Sigmoid colon (tissue), 7 donors: ENCODE measurements at regions of chr12 and their contacts with region 1.

Region 1: GRCh38 chr12:70576346-70577282 is 60.6 kb downstream of the PTPRB start:
- DNase-seq: no peak
- H3K4me3 ChIP-seq: no peak overlapping the region
- H3K27ac ChIP-seq: no peak overlapping the region
- H3K4me1 ChIP-seq: peaks cover 0 to 10% (median 8%) of the 10 kb centered on the region in 4 donors
- H3K27me3 ChIP-seq: peaks cover 0 to 4% (median 0%) of the 10 kb centered on the region in 3 donors
- CTCF ChIP-seq: peak; percentile 32 to 72 (median 68)
- EP300 ChIP-seq: no peak
- POLR2A ChIP-seq: no peak

Region 2: DNA sequence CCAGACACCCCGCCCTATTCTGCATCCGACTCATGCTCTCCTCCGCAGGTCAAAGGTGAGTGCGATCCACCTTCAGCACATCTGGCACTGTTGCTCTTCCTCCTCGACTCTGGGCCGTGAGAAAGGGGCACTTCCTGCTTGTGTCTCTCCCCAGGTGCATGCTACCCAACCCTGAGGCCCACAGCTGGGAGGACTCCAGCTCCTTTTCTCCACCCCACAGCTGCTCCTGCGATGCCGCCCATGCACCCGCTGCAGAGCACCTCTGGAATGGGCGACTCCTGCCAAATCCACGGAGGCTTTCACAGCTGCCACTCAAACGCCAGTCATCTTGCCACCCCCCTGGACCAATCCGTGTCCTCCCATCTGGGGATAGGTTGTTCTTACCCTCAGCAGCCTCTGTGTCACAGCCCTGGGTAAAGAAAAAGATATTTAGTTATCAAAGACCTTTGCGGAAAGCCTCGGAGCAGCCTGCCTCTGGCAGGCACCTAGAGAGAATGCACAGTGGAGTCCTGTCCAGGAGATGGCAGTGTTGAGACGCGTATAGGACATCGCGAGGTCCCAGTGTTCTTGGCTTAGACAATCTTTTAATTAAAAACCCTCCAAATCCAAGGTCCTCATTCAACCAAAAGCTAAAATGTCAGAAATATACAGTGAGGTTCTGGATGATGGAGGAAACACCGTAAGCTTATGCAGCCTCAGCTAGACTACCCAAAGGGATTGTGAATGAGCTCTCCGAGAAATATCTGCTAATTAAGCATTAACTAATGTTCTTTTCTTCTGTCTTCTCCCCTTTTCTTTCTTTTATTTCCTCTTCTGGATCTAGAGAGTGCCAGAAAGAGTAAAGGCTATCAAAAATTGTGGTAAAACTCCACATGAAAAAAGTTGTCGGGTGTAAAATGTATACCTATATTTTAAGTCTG is 697.3 kb before region 1 on chr12:
- intact Hi-C with region 1: loop called (anchors 1 kb)
- DNase-seq: no peak
- H3K4me3 ChIP-seq: no peak overlapping the region
- H3K27ac ChIP-seq: no peak overlapping the region
- H3K4me1 ChIP-seq: peaks cover 0 to 8% (median 3%) of the 10 kb centered on the region in 4 donors
- H3K27me3 ChIP-seq: peaks cover 0 to 12% (median 0%) of the 10 kb centered on the region in 3 donors
- CTCF ChIP-seq: peak; percentile 29 to 74 (median 68)
- EP300 ChIP-seq: no peak
- POLR2A ChIP-seq: no peak

Region 3: DNA sequence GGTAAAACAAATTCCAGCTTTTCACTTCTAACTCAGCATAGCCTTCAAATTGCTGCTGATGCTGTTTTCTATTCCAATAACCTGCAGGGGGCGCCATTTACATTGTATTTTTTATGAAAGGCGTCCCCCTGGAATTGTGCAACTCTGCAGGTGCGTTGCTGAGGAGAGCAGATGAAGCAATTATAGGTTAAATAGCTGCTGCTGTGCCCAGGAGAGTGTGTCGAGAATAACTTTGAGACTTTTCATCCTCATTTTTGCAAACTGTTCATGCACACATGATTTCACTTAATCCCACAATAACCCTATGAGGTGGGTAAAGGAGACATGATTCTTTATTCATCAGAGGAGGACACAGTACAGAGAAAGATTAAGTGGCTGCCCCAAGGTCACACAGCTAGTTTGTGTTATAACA is 675.9 kb before region 1 on chr12:
- intact Hi-C with region 1: loop called (anchors 1 kb)
- DNase-seq: peak; percentile 79
- H3K4me3 ChIP-seq: no peak overlapping the region
- H3K27ac ChIP-seq: no peak overlapping the region
- H3K4me1 ChIP-seq: no peaks in the 10 kb centered on the region
- H3K27me3 ChIP-seq: no peaks in the 10 kb centered on the region
- CTCF ChIP-seq: peak; percentile 40 to 79 (median 71)
- EP300 ChIP-seq: no peak
- POLR2A ChIP-seq: no peak

Region 4: DNA sequence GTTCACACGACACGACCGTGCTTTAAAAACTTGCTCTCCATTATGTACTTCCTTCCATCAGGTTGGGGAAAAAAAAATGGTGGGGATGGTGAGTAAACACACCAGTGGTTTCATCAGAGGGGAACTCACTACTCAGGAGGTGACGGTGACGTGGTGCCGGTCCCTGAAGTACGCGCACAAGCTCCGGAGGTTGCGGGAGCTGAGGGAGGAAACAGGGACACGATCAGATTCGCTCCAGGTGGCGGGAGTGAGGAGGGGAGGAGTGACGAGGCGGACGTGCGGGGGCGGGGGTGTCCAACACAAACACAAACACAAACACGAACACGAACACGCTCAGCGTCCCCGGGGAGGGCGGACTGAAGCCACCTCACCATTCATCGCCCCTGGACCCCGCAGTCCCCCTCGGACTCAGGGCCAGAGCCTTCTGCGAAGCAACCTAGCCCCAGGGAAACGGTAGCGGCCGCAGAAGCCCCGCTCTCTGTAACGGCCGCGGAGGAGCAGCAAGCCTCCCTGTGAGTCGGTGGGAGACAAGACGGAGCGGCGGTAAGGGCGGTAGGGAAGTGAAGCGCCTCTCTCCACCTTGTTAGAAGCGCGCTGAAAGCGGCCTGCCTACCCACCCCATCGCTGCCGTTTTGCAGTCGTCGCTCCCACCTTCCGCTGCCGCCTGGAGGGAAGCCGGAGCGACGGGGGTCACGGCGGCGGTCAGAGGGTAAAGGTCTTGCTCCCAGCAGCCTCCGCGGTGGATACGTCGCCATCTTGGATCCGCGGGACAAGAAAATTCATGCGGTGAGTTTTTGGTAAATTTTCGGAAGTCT is 333.7 kb before region 1 on chr12 and contains the start of gene CNOT2:
- intact Hi-C with region 1: loop called (anchors 2 kb)
- DNase-seq: peak; percentile 93
- H3K4me3 ChIP-seq: peak within 1 kb of the TSS; percentile 70 to 95 (median 86)
- H3K27ac ChIP-seq: peak within 1 kb of the TSS; percentile 87 to 99 (median 96)
- H3K4me1 ChIP-seq: peaks cover 0 to 52% (median 41%) of the 10 kb centered on the region in 4 donors
- H3K27me3 ChIP-seq: no peaks in the 10 kb centered on the region
- CTCF ChIP-seq: no peak
- EP300 ChIP-seq: no peak
- POLR2A ChIP-seq: no peak
- total RNA-seq, gene CNOT2: 98.8 to 171 (median 123) TPM

Region 5: GRCh38 chr12:70364695-70365397 is 211.8 kb before region 1 on chr12:
- intact Hi-C with region 1: loop called (anchors 5 kb)
- DNase-seq: no peak
- H3K4me3 ChIP-seq: peak overlapping the region in 3 of 4 donors; percentile 56 to 72 (median 70)
- H3K27ac ChIP-seq: no peak overlapping the region
- H3K4me1 ChIP-seq: peaks cover 0 to 23% (median 19%) of the 10 kb centered on the region in 4 donors
- H3K27me3 ChIP-seq: peaks cover 19 to 45% (median 23%) of the 10 kb centered on the region in 3 donors
- CTCF ChIP-seq: no peak
- EP300 ChIP-seq: no peak
- POLR2A ChIP-seq: no peak

Region 6: DNA sequence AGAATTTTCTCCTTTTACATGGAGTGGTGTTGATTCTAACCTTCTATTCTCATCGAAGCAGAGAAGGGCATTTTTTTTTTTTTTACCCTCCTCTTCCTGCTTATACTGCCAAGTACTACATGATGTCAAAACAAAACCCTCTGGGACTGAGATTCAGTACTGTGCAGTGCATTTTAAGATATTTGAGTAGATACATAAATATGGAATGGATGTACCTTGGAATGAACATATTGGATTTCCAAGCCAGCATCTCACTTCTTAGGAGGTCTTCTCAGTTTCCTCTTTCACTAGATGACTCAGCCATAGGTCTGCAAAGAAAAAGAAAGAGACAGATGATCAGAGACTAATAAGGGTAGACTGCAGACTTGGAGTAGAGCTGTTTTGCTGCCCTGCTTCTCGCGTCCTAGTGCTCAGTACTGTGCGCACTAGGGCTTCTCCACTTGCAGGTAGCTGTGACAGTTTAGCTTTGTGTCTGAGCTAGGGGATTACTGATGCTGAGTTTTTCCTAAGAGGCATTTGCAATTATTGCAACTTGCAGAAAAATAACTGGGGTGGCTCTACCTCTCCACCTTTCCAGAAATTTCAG is 1382.5 kb after region 1 on chr12:
- intact Hi-C with region 1: no loop called
- DNase-seq: no peak
- H3K4me3 ChIP-seq: no peak overlapping the region
- H3K27ac ChIP-seq: no peak overlapping the region
- H3K4me1 ChIP-seq: peaks cover 0 to 24% (median 12%) of the 10 kb centered on the region in 4 donors
- H3K27me3 ChIP-seq: no peaks in the 10 kb centered on the region
- CTCF ChIP-seq: no peak
- EP300 ChIP-seq: no peak
- POLR2A ChIP-seq: no peak